Activated CD4-positive, alpha-beta memory T cell treated with anti-CD3 and anti-CD28 coated beads for 36 hours (primary cell): ENCODE measurements at regions of chr2 and their contacts with region 1.

Region 1: DNA sequence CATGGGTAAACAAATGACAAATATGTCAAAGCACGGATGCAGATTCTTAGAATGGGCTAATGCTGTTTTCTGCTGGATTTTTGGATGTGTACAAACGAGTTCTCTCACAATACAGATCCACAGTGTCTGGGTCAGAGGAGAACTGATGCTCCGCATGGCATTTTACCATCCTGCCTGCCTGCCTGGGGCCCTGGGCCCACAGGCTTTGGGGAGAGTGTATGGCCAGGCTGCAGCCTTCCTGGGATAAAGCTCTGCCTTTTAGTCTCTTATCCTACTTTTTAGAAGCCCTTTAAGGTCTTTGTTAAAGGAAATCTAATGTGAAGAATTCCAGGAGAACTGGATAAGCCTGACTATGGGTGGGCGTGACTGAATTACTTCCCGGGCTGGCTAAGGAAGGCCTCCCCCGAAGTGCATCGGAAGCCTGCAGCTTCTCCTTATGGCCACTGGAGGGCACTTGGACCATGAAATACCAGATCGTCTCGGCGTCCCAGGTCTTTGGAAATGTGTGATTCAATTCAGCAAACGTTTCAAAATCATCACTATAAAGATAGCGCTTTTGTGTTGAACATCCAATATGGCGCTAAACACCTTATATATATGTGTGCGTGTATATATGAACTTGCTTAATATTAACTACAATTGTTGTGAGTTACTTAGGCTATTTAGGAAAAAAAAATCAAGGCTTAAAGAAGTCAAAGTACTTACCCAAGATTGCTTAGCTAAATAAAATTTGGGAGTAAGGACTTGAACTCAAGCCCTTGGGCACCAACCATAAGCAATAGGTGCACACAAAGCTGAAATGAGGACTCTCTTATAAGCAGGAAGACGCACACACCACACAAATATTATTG is 15.2 kb upstream of the DNPEP start:
- DNase-seq: peak; percentile 70
- H3K4me3 Mint-ChIP-seq: no peak overlapping the region
- H3K27ac Mint-ChIP-seq: no peak overlapping the region
- H3K4me1 Mint-ChIP-seq: no peaks in the 10 kb centered on the region
- H3K27me3 Mint-ChIP-seq: peaks cover 5% of the 10 kb centered on the region

Region 2: GRCh38 chr2:219314804-219315468 is 88.0 kb before region 1 on chr2:
- CTCF ChIA-PET with region 1: no interaction called
- POLR2A ChIA-PET with region 1: no interaction called
- intact Hi-C with region 1: no loop called
- DNase-seq: no peak
- H3K4me3 Mint-ChIP-seq: no peak overlapping the region
- H3K27ac Mint-ChIP-seq: no peak overlapping the region
- H3K4me1 Mint-ChIP-seq: no peaks in the 10 kb centered on the region
- H3K27me3 Mint-ChIP-seq: peaks cover 15% of the 10 kb centered on the region

Region 3: DNA sequence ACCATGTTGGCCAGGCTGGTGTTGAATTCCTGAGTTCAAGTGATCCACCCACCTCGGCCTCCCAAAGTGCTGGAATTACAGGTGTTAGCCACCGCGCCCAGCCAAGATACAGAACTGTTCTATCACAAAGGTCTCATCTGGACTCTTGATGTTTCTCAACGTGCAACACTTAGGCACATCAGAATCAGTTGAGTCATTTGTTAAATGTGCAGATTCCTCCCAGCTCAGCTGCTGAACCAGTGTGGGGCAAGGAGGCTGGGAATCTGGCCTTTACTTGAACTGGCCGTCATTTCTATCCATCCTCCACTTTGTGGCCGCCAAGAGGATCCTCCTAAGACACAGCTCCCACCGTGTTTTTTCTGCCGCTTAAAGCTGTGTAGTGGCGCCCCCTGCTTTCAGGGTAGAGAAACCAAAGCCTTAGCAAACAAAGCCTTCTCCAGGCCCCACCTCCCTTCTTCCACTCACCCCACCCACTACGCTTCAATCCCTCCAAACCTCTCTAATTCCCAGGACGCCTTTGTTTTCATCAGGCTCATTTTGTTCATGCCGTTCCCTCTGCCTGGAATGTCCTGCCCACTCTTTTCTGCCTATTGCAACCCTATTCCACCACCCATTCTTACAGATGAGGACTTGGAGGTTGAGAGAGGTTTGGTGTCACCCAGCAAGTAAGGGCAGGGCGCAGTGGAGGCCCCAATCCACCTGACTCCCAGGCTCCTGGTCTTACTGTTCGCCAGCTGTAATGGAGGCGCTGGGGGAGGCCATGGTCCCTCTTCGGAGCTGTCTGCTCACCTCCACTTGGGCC is 31.0 kb after region 1 on chr2:
- CTCF ChIA-PET with region 1: interaction called, 8 read pairs
- POLR2A ChIA-PET with region 1: no interaction called
- intact Hi-C with region 1: loop called (anchors 2 kb)
- DNase-seq: peak; percentile 55
- H3K4me3 Mint-ChIP-seq: no peak overlapping the region
- H3K27ac Mint-ChIP-seq: no peak overlapping the region
- H3K4me1 Mint-ChIP-seq: no peaks in the 10 kb centered on the region
- H3K27me3 Mint-ChIP-seq: peaks cover 25% of the 10 kb centered on the region

Region 4: GRCh38 chr2:219459460-219460311 is 56.8 kb after region 1 on chr2:
- CTCF ChIA-PET with region 1: interaction called, 8 read pairs
- POLR2A ChIA-PET with region 1: no interaction called
- intact Hi-C with region 1: loop called (anchors 2 kb)
- DNase-seq: peak; percentile 51
- H3K4me3 Mint-ChIP-seq: no peak overlapping the region
- H3K27ac Mint-ChIP-seq: no peak overlapping the region
- H3K4me1 Mint-ChIP-seq: peaks cover 5% of the 10 kb centered on the region
- H3K27me3 Mint-ChIP-seq: no peaks in the 10 kb centered on the region

Region 5: DNA sequence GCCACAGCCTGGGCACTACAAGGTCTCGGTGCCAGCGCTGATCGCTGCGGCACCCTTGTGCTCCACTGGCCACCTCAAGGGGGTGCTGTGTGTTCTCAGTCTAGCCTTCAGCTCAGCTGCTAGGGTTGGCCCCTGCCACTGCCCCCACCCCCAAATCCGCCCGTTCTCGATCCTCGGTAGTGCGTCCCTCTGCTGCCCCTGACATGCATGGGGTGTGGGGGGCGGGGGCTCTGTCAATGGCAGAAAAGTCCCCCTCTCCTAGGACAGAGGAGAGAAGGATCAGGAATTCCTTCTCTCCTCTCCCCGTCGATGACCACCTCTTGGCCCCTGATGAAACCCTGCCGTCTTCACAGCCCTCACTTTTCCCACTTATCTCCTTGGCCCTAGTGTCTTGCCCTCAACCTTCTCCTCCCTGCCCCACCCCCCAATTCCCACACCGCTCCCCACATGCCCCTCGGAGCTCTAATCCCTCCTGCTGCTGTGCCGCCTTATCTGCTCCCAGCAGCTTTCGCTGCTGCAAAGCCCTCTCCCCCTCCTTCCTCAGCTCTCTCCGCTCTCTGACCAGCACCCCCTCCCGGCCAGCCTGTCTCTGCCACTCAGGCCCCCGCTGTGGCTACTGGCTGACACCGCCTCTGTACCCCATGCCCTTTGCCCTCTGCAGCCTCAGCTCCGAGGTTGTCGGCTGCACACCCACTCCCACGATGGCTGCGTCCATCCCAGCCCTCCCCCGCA is 107.1 kb after region 1 on chr2:
- CTCF ChIA-PET with region 1: interaction called, 12 read pairs
- POLR2A ChIA-PET with region 1: no interaction called
- intact Hi-C with region 1: no loop called
- DNase-seq: peak; percentile 65
- H3K4me3 Mint-ChIP-seq: no peak overlapping the region
- H3K27ac Mint-ChIP-seq: no peak overlapping the region
- H3K4me1 Mint-ChIP-seq: peaks cover 25% of the 10 kb centered on the region
- H3K27me3 Mint-ChIP-seq: peaks cover 46% of the 10 kb centered on the region

Region 6: DNA sequence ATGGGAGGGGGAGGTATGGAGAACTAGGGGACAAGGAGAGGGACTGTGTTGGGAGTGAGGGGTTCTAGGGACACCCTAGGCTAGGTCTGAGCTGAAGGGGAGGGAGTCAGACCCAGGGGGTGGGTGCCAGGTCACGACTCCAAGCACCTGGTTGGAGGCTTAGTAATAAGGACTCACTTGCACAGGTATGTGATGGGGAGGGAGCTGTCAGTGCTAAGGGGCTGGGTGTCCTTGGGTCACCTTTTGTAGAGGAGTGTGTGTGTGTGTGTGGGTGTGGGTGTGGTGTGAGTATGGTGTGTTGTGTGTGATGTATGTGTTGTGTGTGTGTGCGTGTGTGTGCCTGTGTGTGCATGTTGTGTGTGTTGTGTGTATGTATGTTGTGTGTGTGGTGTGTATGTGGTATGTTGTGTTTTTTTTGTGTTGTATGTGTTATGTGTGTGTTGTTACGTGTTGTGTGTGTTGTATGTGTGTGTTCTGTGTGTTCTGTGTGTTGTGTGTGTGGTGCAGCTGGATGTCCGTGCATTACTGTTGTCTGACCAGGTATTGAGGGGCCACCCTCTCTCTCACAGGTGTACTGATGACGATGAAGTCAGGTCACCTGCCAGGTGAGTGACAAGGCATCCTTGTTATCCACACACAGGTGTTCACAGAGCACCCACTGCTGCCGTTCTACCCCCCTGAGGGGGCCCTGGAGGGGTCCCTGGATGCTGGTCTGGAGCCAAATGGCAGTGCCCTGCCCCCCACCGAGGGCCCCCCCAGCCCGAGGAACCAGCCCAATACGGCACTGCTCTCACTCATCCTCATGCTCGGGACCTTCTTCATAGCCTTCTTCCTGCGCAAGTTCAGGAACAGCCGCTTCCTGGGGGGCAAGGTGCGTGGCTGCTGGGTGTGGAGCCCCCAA is 234.3 kb after region 1 on chr2:
- CTCF ChIA-PET with region 1: no interaction called
- POLR2A ChIA-PET with region 1: no interaction called
- intact Hi-C with region 1: no loop called
- DNase-seq: no peak
- H3K4me3 Mint-ChIP-seq: no peak overlapping the region
- H3K27ac Mint-ChIP-seq: no peak overlapping the region
- H3K4me1 Mint-ChIP-seq: peaks cover 3% of the 10 kb centered on the region
- H3K27me3 Mint-ChIP-seq: peaks cover 11% of the 10 kb centered on the region